ENCODE measurements at regions of chr20 and their contacts with region 1.

Region 1: GRCh38 chr20:48682529-48683251 is 145.1 kb downstream of the PREX1 start:
- DNase-seq: peak; percentile 92
- ATAC-seq: peak; percentile 80

Region 2: GRCh38 chr20:48329635-48330277 is 352.9 kb before region 1 on chr20:
- intact Hi-C with region 1: no loop called
- DNase-seq: no peak
- ATAC-seq: no peak

Region 3: DNA sequence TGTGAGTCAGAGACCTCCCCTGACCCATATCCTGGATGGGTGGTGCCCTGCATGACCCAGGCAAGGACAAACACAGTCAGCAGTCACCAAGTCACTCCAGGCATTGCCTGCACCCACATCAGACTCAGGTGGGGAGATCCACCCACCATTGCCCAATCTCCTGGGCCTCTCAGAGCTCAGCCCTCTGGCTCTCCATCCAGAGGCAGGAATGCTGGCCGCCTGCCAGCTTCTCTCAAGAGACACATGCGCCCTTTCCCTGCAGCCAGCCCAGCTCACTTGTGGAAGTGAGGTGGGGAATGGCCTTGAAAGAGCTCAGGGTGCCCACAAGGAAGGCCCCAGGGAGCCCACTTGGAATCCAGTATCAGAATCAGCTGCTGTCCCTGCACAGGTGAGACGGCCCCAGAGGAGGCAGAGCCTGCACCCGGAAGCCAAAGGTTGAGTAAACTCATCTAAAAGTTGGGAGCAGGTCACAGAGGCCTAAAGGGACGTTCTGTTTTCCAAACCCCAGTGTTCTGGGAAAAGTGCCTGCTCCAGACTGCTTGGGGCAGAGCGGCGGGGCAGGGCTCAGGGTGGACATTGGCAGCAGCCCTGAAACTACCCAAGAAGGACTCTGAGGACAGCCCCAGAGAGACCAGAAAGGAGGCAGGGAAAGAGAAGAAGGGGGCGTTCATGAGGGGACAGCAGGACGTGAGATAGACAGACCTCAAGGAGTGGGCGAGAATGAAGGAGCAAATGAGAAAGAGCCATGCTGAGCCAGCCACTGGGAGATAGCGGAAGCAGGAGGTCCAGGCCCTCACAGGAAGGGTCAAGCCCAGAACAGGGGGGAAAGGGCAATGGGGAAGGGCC is 15.4 kb after region 1 on chr20:
- intact Hi-C with region 1: loop called (anchors 2 kb)
- DNase-seq: peak; percentile 91
- ATAC-seq: peak; percentile 92

Region 4: GRCh38 chr20:48733296-48733887 is 50.7 kb after region 1 on chr20:
- intact Hi-C with region 1: loop called (anchors 5 kb)
- DNase-seq: no peak
- ATAC-seq: no peak

Region 5: DNA sequence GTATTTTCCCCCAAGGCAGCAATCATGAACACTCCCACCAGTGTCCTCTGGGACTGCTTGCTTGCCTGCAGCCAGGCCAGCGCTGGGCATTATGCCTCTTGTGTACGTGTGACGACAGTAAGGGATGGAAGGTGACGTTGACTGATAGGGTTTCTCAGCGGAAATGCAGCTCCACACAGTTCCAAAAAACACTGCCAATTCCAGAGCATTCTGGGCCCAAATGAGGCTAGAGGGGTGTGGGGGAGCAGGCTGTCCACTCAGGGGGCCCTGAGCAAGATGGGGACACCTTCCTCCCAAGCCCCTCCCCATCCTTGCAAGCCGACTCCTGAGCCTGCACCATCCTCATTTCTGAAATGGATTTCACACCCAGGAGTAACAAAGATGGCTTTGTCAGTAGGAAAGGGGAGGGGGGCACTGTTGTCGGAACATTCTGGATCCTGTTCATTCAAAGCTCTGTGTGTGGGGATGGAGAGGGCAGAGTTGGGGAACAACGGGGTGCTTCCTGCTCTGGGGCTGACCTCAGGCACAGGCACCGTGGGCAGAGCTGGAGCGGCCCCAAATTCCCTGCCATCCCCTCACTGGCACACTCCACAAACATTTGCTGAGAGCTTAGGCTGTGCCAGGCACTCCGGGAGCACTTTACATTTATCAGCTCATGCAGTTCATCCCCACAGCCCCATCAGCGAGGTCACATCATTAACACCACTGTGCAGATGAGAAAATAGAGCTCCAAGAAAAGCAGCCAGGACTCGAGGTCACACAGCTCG is 125.2 kb after region 1 on chr20:
- intact Hi-C with region 1: loop called (anchors 5 kb)
- DNase-seq: peak; percentile 79
- ATAC-seq: peak; percentile 87